ENCODE measurements at regions of chr4 and their contacts with region 1.

Region 1: GRCh38 chr4:72505314-72505744 is 63.7 kb downstream of the ADAMTS3 start:
- DNase-seq: peak; percentile 25
- CTCF ChIP-seq: peak; percentile 60

Region 2: GRCh38 chr4:72938516-72938915 is 433.2 kb after region 1 on chr4:
- CTCF ChIA-PET with region 1: no interaction called
- POLR2A ChIA-PET with region 1: no interaction called
- DNase-seq: no peak
- CTCF ChIP-seq: no peak

Region 3: GRCh38 chr4:73021634-73022033 is 516.3 kb after region 1 on chr4:
- CTCF ChIA-PET with region 1: interaction called, 10 read pairs
- POLR2A ChIA-PET with region 1: no interaction called
- DNase-seq: peak; percentile 42
- CTCF ChIP-seq: peak; percentile 30

Region 4: GRCh38 chr4:73499996-73500765 is 994.9 kb after region 1 on chr4:
- CTCF ChIA-PET with region 1: no interaction called
- POLR2A ChIA-PET with region 1: no interaction called
- DNase-seq: no peak
- CTCF ChIP-seq: no peak